Caco-2 (cell line): ENCODE measurements at regions of chr11 and their contacts with region 1.

Region 1: DNA sequence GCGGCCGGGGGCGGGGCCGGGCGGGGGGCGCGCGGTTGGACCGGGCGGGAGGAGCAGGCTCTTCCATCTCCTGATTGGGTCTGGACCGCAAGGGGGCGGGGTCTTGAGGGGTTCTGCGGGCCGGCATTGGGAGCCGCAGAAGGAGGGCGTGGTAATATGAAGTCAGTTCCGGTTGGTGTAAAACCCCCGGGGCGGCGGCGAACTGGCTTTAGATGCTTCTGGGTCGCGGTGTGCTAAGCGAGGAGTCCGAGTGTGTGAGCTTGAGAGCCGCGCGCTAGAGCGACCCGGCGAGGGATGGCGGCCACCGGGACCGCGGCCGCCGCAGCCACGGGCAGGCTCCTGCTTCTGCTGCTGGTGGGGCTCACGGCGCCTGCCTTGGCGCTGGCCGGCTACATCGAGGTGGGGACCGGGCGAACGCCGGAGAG is at the start of gene APLP2:
- DNase-seq: peak; percentile 100
- H3K4me3 ChIP-seq: peak within 1 kb of the TSS; percentile 99
- H3K4me3 Mint-ChIP-seq: peak within 1 kb of the TSS; percentile 90
- H3K27ac Mint-ChIP-seq: peak within 1 kb of the TSS; percentile 91
- H3K4me1 ChIP-seq: peaks cover 41% of the 10 kb centered on the region
- H3K4me1 Mint-ChIP-seq: peaks cover 27% of the 10 kb centered on the region
- H3K27me3 ChIP-seq: no peaks in the 10 kb centered on the region
- H3K27me3 Mint-ChIP-seq: no peaks in the 10 kb centered on the region
- CTCF ChIP-seq: no peak
- total RNA-seq, gene APLP2: 1,761 and 2,076 TPM in 2 replicates

Region 2: GRCh38 chr11:129895126-129896041 is 174.3 kb before region 1 on chr11 and contains the start of gene NFRKB:
- CTCF ChIA-PET with region 1: no interaction called
- POLR2A ChIA-PET with region 1: no interaction called
- intact Hi-C with region 1: loop called (anchors 1 kb)
- DNase-seq: peak; percentile 94 to 98
- H3K4me3 ChIP-seq: peak within 1 kb of the TSS; percentile 86
- H3K4me3 Mint-ChIP-seq: peak within 1 kb of the TSS; percentile 84
- H3K27ac Mint-ChIP-seq: peak within 1 kb of the TSS; percentile 80
- H3K4me1 ChIP-seq: peaks cover 14% of the 10 kb centered on the region
- H3K4me1 Mint-ChIP-seq: peaks cover 13% of the 10 kb centered on the region
- H3K27me3 ChIP-seq: no peaks in the 10 kb centered on the region
- H3K27me3 Mint-ChIP-seq: no peaks in the 10 kb centered on the region
- CTCF ChIP-seq: no peak
- total RNA-seq, gene NFRKB: 101 and 104 TPM in 2 replicates

Region 3: DNA sequence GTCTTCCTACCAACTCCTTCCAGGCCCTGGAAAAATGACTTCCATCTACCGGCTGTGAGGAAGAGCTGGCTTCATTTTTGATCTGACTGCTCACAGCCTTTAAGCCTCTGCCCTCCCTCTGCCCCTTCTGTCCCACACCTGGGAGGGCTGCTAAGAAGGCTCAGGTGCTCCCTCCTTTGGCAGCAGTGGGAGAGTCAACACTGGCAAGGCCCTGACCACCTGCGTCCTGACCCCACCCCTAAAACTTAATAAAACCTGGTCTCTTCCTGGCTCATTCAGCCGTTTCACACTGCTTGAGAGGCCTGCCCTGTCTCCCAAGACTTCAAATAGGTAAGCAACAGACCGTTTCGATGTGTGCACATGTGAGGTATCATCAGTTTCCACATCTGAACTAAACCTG is 122.2 kb before region 1 on chr11:
- CTCF ChIA-PET with region 1: no interaction called
- POLR2A ChIA-PET with region 1: interaction called, 3 read pairs
- intact Hi-C with region 1: loop called (anchors 1 kb)
- DNase-seq: peak in 1 of 2 experiments; percentile 59
- H3K4me3 ChIP-seq: no peak overlapping the region
- H3K4me3 Mint-ChIP-seq: no peak overlapping the region
- H3K27ac Mint-ChIP-seq: peak overlapping the region; percentile 72
- H3K4me1 ChIP-seq: peaks cover 21% of the 10 kb centered on the region
- H3K4me1 Mint-ChIP-seq: peaks cover 56% of the 10 kb centered on the region
- H3K27me3 ChIP-seq: no peaks in the 10 kb centered on the region
- H3K27me3 Mint-ChIP-seq: no peaks in the 10 kb centered on the region
- CTCF ChIP-seq: peak in 1 of 2 experiments; percentile 65

Region 4: DNA sequence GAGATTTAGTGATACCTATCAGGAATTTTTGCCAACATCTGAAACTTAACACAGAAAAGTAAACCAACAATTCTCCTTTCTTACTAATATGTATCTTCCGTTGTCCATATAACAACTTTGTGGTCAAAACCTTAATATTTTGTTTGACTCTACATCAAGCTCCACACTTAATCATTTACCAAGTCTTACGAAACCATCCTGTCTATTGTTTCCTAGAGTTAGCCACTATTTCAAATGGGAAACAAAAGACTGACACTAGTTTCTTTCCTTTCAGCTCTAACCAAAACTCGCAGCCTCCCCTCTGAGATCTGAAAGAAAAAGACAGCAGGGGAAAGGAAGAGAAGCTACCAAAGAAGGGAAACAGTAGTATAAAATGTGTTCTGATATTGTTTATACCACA is 40.6 kb before region 1 on chr11:
- CTCF ChIA-PET with region 1: interaction called, 4 read pairs
- POLR2A ChIA-PET with region 1: interaction called, 9 read pairs
- intact Hi-C with region 1: loop called (anchors 1 kb)
- DNase-seq: no peak
- H3K4me3 ChIP-seq: no peak overlapping the region
- H3K4me3 Mint-ChIP-seq: peak overlapping the region; percentile 10
- H3K27ac Mint-ChIP-seq: peak overlapping the region; percentile 53
- H3K4me1 ChIP-seq: peaks cover 66% of the 10 kb centered on the region
- H3K4me1 Mint-ChIP-seq: peaks cover 47% of the 10 kb centered on the region
- H3K27me3 ChIP-seq: no peaks in the 10 kb centered on the region
- H3K27me3 Mint-ChIP-seq: no peaks in the 10 kb centered on the region
- CTCF ChIP-seq: no peak

Region 5: GRCh38 chr11:130055617-130056016 is 14.1 kb before region 1 on chr11:
- CTCF ChIA-PET with region 1: no interaction called
- POLR2A ChIA-PET with region 1: interaction called, 10 read pairs
- intact Hi-C with region 1: no loop called
- DNase-seq: no peak
- H3K4me3 ChIP-seq: no peak overlapping the region
- H3K4me3 Mint-ChIP-seq: no peak overlapping the region
- H3K27ac Mint-ChIP-seq: no peak overlapping the region
- H3K4me1 ChIP-seq: no peaks in the 10 kb centered on the region
- H3K4me1 Mint-ChIP-seq: no peaks in the 10 kb centered on the region
- H3K27me3 ChIP-seq: no peaks in the 10 kb centered on the region
- H3K27me3 Mint-ChIP-seq: no peaks in the 10 kb centered on the region
- CTCF ChIP-seq: no peak

Region 6: GRCh38 chr11:130340671-130341319 is 271.1 kb after region 1 on chr11:
- CTCF ChIA-PET with region 1: no interaction called
- POLR2A ChIA-PET with region 1: no interaction called
- intact Hi-C with region 1: no loop called
- DNase-seq: no peak
- H3K4me3 ChIP-seq: no peak overlapping the region
- H3K4me3 Mint-ChIP-seq: no peak overlapping the region
- H3K27ac Mint-ChIP-seq: no peak overlapping the region
- H3K4me1 ChIP-seq: no peaks in the 10 kb centered on the region
- H3K4me1 Mint-ChIP-seq: no peaks in the 10 kb centered on the region
- H3K27me3 ChIP-seq: no peaks in the 10 kb centered on the region
- H3K27me3 Mint-ChIP-seq: peaks cover 3% of the 10 kb centered on the region
- CTCF ChIP-seq: no peak

Region 7: GRCh38 chr11:131534611-131535010 is 1464.9 kb after region 1 on chr11:
- CTCF ChIA-PET with region 1: no interaction called
- POLR2A ChIA-PET with region 1: no interaction called
- intact Hi-C with region 1: no loop called
- DNase-seq: no peak
- H3K4me3 ChIP-seq: no peak overlapping the region
- H3K4me3 Mint-ChIP-seq: no peak overlapping the region
- H3K27ac Mint-ChIP-seq: no peak overlapping the region
- H3K4me1 ChIP-seq: no peaks in the 10 kb centered on the region
- H3K4me1 Mint-ChIP-seq: no peaks in the 10 kb centered on the region
- H3K27me3 ChIP-seq: no peaks in the 10 kb centered on the region; the same call in none of the 2 replicates
- H3K27me3 Mint-ChIP-seq: peaks cover 25% of the 10 kb centered on the region
- CTCF ChIP-seq: no peak